Heart left ventricle (tissue), 16 donors: ENCODE measurements at regions of chr11 and their contacts with region 1.

Region 1: DNA sequence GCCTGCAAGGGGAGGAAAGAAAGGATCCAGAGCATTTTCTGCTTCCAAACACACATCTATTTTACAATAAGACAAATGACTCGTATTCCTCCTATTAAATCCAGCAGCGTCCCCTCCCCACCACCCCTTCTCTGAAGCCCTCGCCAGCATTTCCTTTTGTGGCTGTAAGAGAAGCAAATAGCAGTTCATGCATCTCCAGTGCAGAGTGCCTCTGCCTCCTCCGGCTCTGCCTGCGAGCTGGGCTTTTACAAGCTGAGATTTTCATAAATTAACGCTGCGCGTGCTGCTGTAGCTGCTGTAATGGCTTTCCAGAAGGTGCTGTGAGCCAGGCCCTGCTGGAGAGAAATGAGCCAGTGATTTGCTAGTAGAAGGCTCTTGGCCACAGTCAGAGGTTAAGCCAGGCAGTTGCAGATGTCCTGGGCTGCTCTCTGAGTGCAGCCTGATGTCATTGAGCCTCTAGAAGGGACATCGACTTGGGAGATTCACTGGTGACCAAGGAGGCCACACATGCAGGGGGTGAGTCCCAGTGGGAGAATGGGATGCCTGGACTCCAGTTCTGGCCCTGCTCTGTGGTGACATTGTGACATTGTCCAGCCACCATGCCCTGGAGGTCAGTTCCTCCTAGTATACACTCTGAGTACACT is 134.5 kb upstream of the NAV2 start:
- DNase-seq: peak in 4 of 5 donors; percentile 48 to 73 (median 62)
- ATAC-seq: peak; percentile 56 to 71 (median 69)
- H3K4me3 ChIP-seq: peak overlapping the region in 4 of 12 donors; percentile 3 to 15 (median 8)
- H3K27ac ChIP-seq: peak overlapping the region; percentile 72 to 92 (median 88)
- H3K4me1 ChIP-seq: peaks cover 10 to 63% (median 36%) of the 10 kb centered on the region in 12 donors
- H3K27me3 ChIP-seq: no peaks in the 10 kb centered on the region
- CTCF ChIP-seq: no peak
- POLR2A ChIP-seq: no peak

Region 2: DNA sequence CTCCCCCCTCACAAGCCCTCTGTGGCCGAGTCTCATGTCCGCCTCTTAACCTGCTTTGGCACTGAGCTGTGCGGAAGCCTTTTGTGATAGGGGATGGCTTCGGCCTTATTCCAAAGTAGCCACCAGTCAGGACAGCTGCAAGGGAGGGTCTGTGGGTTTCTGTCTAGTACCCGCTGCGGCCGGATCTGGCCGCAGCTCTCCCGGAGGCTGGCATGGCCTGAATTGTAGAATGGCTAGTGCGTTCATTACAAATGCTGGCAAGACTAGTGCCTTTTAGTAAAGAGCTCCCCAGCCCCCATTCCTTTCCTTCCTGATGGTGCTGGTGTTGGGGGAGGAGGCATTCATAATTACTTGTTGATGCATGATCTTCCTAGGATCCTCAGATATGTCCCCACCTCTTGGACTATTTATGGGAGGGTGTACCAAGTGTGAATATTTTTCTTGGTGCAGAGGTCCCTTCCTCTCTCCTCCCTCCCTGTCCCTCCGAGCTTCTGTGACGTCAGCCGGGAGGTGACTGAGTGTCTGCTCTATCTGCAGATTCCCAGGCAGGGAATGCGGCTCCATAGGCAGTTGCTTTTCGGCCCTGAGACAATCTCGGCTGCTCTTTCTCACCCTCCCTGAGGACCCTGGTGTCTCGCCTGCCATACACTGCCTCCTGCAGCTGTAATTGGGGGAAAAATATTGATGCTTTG is 228.6 kb before region 1 on chr11:
- intact Hi-C with region 1: no loop called
- DNase-seq: peak in 2 of 5 donors; percentile 35 to 45
- ATAC-seq: peak in 1 of 4 donors; percentile 69
- H3K4me3 ChIP-seq: peak overlapping the region in 1 of 12 donors; percentile 4
- H3K27ac ChIP-seq: no peak overlapping the region
- H3K4me1 ChIP-seq: peaks cover 3 to 42% (median 20%) of the 10 kb centered on the region in 12 donors
- H3K27me3 ChIP-seq: peaks cover 9 to 71% (median 40%) of the 10 kb centered on the region in 9 donors
- CTCF ChIP-seq: no peak
- POLR2A ChIP-seq: no peak

Region 3: DNA sequence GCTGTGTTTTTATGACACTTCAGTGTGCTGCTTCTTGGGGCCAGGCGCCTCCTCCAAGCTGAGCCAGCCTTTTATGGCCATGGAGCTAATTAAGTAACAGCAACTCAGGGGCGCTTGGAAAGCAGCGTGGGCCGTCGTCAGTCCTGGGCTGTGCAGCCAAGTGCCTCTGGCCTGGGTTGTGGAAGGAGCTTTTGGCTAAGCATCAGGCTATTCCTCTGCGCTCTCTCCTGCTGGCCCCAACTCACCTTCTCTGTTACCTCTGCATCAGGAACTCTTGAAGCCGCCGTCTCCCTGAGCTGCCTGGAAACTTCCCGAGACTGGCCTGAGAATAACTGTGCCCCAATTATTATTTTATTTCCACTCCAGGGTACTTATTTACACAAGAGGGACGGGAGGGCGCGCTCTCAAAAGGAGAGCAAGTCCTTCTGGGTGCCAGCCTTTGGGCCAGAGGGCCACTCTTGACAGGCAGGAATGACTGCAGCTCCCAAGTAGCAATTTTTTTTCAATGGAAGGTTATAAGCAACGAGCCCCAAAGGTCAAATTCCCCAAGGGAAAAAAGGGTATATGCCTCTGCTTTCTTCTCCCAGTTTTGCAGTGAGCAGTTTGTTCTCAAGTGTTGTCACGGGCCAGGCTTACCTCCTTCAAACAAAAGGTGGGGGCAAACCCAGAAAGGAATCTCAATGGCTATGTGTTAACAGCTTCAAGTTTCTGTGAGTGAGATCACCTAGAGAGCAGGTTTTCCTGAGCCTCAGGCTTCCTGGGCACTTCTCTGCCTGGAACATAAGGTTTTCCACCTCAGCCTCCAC is 96.0 kb after region 1 on chr11:
- intact Hi-C with region 1: loop called in 2 of 10 experiments (anchors 5 kb)
- DNase-seq: peak; percentile 73 to 90 (median 85)
- ATAC-seq: peak; percentile 85 to 91 (median 90)
- H3K4me3 ChIP-seq: no peak overlapping the region
- H3K27ac ChIP-seq: peak overlapping the region; percentile 73 to 93 (median 84)
- H3K4me1 ChIP-seq: peaks cover 0 to 69% (median 33%) of the 10 kb centered on the region in 12 donors
- H3K27me3 ChIP-seq: no peaks in the 10 kb centered on the region
- CTCF ChIP-seq: no peak
- POLR2A ChIP-seq: no peak

Region 4: GRCh38 chr11:19679952-19680828 is 102.1 kb after region 1 on chr11:
- intact Hi-C with region 1: loop called in 1 of 10 experiments (anchors 5 kb)
- DNase-seq: peak; percentile 83 to 94 (median 86)
- ATAC-seq: peak; percentile 32 to 85 (median 78)
- H3K4me3 ChIP-seq: no peak overlapping the region
- H3K27ac ChIP-seq: peak overlapping the region; percentile 43 to 88 (median 78)
- H3K4me1 ChIP-seq: peaks cover 2 to 87% (median 47%) of the 10 kb centered on the region in 12 donors
- H3K27me3 ChIP-seq: no peaks in the 10 kb centered on the region
- CTCF ChIP-seq: peak in 1 of 12 donors; percentile 19
- POLR2A ChIP-seq: no peak

Region 5: DNA sequence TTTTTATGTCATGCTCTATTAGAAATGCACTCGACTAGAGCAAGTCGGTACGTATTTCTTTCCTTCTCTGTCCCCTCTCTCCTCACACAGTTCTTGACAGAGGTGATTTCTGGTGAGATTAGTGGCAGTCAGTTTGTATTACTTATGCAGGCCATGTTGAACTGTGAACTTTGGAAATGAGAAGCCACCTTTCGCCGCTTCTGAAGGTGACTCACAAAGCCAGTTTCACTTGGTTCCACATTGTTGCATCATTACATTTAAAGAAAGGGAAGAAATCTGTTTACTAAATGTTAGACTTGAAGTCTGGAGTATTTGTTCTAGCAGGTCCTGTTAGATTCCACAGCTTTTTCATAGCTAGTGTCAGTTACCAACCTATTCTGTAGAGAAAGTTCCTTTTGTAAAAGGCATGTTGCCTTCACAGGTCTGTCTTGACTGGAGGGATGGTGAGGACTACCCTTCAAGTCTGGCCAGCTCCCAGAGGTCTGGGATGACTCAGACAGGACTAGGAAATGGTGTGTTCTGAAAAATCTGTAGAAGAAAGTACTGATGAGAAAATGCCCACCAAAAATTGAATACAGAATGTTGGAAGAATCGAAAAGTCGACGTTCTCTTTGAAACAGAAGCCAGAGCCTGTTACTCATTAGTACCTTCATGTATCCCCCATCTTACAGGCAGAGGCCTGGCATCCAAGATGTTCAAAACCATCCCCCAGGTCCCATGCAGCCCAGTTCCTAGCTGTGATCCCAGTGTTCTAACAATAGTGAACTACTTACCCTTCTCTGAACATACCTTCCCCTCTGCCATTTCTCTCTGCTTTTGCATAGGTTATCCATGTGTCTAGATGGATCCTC is 400.8 kb after region 1 on chr11:
- intact Hi-C with region 1: no loop called
- DNase-seq: peak in 1 of 5 donors; percentile 49
- ATAC-seq: peak in 2 of 4 donors; percentile 42 to 53
- H3K4me3 ChIP-seq: no peak overlapping the region
- H3K27ac ChIP-seq: peak overlapping the region in 1 of 12 donors; percentile 13
- H3K4me1 ChIP-seq: peaks cover 0 to 38% (median 13%) of the 10 kb centered on the region in 12 donors
- H3K27me3 ChIP-seq: no peaks in the 10 kb centered on the region
- CTCF ChIP-seq: no peak
- POLR2A ChIP-seq: no peak